Caco-2 (cell line): ENCODE measurements at regions of chr7 and their contacts with region 1.

Region 1: GRCh38 chr7:115679976-115680375 is 350.6 kb downstream of the TFEC start:
- DNase-seq: peak in 1 of 2 experiments; percentile 55
- H3K4me3 ChIP-seq: no peak overlapping the region
- H3K4me3 Mint-ChIP-seq: no peak overlapping the region
- H3K27ac Mint-ChIP-seq: no peak overlapping the region
- H3K4me1 ChIP-seq: no peaks in the 10 kb centered on the region
- H3K4me1 Mint-ChIP-seq: peaks cover 7% of the 10 kb centered on the region
- H3K27me3 ChIP-seq: no peaks in the 10 kb centered on the region; the same call in 1 of the 2 replicates
- H3K27me3 Mint-ChIP-seq: no peaks in the 10 kb centered on the region
- CTCF ChIP-seq: peak; percentile 58 to 59

Region 2: DNA sequence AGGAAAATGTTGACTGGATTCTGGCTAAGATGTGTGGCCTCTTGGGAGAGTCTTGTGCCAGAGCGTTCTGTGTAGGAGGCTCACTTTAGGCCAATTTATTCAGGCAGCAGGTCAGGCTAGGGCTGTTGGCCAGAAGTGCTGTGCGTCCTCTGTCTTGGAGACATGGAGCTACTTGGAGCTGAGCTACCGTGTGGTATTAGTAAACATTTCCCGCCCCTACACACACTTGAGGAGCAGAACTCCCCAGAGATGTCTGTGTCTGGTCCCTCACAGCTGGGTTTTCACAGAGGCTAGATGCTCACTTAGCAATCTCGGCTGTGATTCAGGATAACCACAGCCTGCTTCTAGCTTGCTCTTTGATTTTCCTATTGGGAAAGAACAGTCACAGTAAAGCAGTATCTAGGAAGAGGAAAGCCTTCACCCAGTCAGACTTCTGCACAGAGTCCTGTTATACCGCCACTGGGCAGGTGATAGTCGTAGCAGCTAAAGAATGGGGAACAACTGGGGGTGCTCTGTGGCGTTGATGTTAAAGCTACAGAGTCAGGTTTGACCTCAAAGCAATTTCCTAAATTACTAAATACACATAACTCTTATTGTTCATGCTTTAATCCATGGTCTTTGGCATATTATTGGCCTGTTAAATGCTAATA is 671.4 kb before region 1 on chr7:
- CTCF ChIA-PET with region 1: no interaction called
- POLR2A ChIA-PET with region 1: no interaction called
- intact Hi-C with region 1: no loop called
- DNase-seq: no peak
- H3K4me3 ChIP-seq: no peak overlapping the region
- H3K4me3 Mint-ChIP-seq: no peak overlapping the region
- H3K27ac Mint-ChIP-seq: no peak overlapping the region
- H3K4me1 ChIP-seq: 0 out of 2 replicates have a peak, but pooled peaks cover 4% of the 10 kb centered on the region
- H3K4me1 Mint-ChIP-seq: peaks cover 11% of the 10 kb centered on the region
- H3K27me3 ChIP-seq: no peaks in the 10 kb centered on the region
- H3K27me3 Mint-ChIP-seq: no peaks in the 10 kb centered on the region
- CTCF ChIP-seq: no peak

Region 3: GRCh38 chr7:115356139-115356746 is 323.7 kb before region 1 on chr7:
- CTCF ChIA-PET with region 1: no interaction called
- POLR2A ChIA-PET with region 1: no interaction called
- intact Hi-C with region 1: loop called (anchors 1 kb)
- DNase-seq: no peak
- H3K4me3 ChIP-seq: no peak overlapping the region
- H3K4me3 Mint-ChIP-seq: no peak overlapping the region
- H3K27ac Mint-ChIP-seq: no peak overlapping the region
- H3K4me1 ChIP-seq: no peaks in the 10 kb centered on the region
- H3K4me1 Mint-ChIP-seq: no peaks in the 10 kb centered on the region
- H3K27me3 ChIP-seq: no peaks in the 10 kb centered on the region
- H3K27me3 Mint-ChIP-seq: no peaks in the 10 kb centered on the region
- CTCF ChIP-seq: peak; percentile 28 to 51

Region 4: DNA sequence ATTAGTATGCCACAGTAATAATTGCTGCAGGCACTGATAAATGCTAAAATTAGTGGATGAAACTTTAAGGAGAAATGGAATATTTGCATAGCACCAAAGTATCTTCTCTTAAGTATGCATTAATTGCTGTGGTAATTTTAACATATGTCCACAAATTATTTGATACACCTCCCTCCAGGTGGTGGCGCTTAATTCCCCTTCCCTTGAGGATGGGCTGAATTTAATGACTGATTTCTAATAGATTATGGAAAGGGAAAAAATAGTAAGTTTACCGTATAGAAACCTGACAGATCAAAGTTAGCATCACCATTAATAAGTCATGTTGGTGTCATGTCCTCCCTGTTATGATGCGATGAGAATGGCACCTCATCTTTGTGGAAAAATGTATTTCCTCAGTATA is 168.6 kb before region 1 on chr7:
- CTCF ChIA-PET with region 1: interaction called, 3 read pairs
- POLR2A ChIA-PET with region 1: no interaction called
- intact Hi-C with region 1: loop called (anchors 1 kb)
- DNase-seq: no peak
- H3K4me3 ChIP-seq: no peak overlapping the region
- H3K4me3 Mint-ChIP-seq: no peak overlapping the region
- H3K27ac Mint-ChIP-seq: no peak overlapping the region
- H3K4me1 ChIP-seq: no peaks in the 10 kb centered on the region
- H3K4me1 Mint-ChIP-seq: no peaks in the 10 kb centered on the region
- H3K27me3 ChIP-seq: no peaks in the 10 kb centered on the region
- H3K27me3 Mint-ChIP-seq: peaks cover 8% of the 10 kb centered on the region
- CTCF ChIP-seq: no peak

Region 5: DNA sequence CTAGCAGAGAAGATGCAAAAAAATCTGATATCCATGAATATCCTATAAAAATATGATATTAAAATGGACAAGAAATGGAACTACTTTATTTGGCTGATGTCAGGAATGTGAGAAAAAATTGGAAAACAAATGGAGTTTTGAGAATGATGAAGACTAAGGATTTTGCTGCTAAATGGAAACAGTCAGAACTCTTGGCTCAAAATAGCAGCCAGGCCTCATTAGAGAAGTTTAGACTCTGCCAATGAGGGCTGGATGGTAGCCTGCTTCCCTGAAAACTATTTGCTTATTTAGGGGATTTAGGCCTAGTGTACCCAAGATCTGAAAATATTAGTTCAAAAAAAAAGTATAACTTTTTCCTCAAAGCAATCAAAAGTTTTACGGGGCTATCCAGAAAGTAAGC is 107.9 kb before region 1 on chr7:
- CTCF ChIA-PET with region 1: no interaction called
- POLR2A ChIA-PET with region 1: no interaction called
- intact Hi-C with region 1: no loop called
- DNase-seq: no peak
- H3K4me3 ChIP-seq: no peak overlapping the region
- H3K4me3 Mint-ChIP-seq: no peak overlapping the region
- H3K27ac Mint-ChIP-seq: no peak overlapping the region
- H3K4me1 ChIP-seq: no peaks in the 10 kb centered on the region; the same call in 1 of the 2 replicates
- H3K4me1 Mint-ChIP-seq: no peaks in the 10 kb centered on the region
- H3K27me3 ChIP-seq: no peaks in the 10 kb centered on the region
- H3K27me3 Mint-ChIP-seq: no peaks in the 10 kb centered on the region
- CTCF ChIP-seq: no peak

Region 6: DNA sequence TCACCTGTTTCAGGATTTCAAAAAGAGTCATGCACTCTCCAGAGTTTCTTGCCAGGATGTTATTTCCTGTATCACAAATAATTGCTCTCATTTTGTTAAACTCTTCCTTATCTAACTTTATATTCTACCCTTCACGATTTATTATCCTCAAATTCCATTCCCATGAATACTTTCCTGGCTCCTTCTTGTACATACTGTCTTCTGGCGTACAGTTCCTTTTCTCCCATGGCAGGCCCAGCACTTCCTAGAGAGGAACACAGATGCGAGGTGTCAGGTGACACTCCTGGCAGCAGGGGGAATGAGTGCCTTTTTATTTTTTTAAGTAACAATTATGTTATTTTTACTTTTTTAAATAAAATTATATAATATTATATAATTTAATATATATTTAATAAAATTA is 61.3 kb before region 1 on chr7:
- CTCF ChIA-PET with region 1: no interaction called
- POLR2A ChIA-PET with region 1: no interaction called
- intact Hi-C with region 1: no loop called
- DNase-seq: no peak
- H3K4me3 ChIP-seq: no peak overlapping the region
- H3K4me3 Mint-ChIP-seq: no peak overlapping the region
- H3K27ac Mint-ChIP-seq: no peak overlapping the region
- H3K4me1 ChIP-seq: peaks cover 24% of the 10 kb centered on the region
- H3K4me1 Mint-ChIP-seq: peaks cover 19% of the 10 kb centered on the region
- H3K27me3 ChIP-seq: no peaks in the 10 kb centered on the region
- H3K27me3 Mint-ChIP-seq: no peaks in the 10 kb centered on the region
- CTCF ChIP-seq: no peak

Region 7: GRCh38 chr7:115707258-115708012 is 27.5 kb after region 1 on chr7:
- CTCF ChIA-PET with region 1: interaction called, 5 read pairs
- POLR2A ChIA-PET with region 1: no interaction called
- intact Hi-C with region 1: loop called (anchors 1 kb)
- DNase-seq: peak; percentile 38 to 47
- H3K4me3 ChIP-seq: no peak overlapping the region
- H3K4me3 Mint-ChIP-seq: no peak overlapping the region
- H3K27ac Mint-ChIP-seq: peak overlapping the region; percentile 62
- H3K4me1 ChIP-seq: no peaks in the 10 kb centered on the region
- H3K4me1 Mint-ChIP-seq: no peaks in the 10 kb centered on the region
- H3K27me3 ChIP-seq: no peaks in the 10 kb centered on the region
- H3K27me3 Mint-ChIP-seq: peaks cover 6% of the 10 kb centered on the region
- CTCF ChIP-seq: peak; percentile 44 to 51

Region 8: DNA sequence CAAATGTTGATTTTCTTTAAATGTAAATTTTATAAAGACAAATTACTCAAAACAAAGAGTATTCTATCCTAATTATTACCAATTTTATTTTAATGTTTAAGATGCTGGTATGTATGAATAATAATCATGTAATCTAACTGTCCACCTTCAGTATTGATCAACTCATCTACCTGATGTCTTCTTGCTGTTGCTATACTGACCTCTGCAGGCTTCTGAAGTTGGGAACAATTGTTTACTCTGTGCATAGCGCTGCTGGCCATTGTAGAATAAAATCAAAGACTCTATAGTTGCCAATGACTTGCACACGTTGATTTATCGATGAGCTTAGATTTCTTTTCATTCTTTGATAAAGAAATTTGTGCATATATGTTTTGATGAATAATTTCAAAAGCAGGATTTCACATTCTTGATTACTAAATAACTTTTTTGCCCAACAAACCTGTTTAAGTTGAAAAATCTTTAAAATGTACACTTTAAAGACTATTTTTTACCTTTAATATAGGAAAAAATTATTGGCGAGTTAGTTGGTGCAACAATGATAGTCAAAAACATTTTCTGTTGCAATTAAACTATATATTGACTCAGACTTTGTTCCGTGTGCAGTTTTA is 68.3 kb after region 1 on chr7:
- CTCF ChIA-PET with region 1: no interaction called
- POLR2A ChIA-PET with region 1: no interaction called
- intact Hi-C with region 1: loop called (anchors 2 kb)
- DNase-seq: peak in 1 of 2 experiments; percentile 40
- H3K4me3 ChIP-seq: no peak overlapping the region
- H3K4me3 Mint-ChIP-seq: no peak overlapping the region
- H3K27ac Mint-ChIP-seq: no peak overlapping the region
- H3K4me1 ChIP-seq: no peaks in the 10 kb centered on the region
- H3K4me1 Mint-ChIP-seq: no peaks in the 10 kb centered on the region
- H3K27me3 ChIP-seq: no peaks in the 10 kb centered on the region
- H3K27me3 Mint-ChIP-seq: no peaks in the 10 kb centered on the region
- CTCF ChIP-seq: peak; percentile 29 to 64

Region 9: GRCh38 chr7:115910541-115911164 is 230.7 kb after region 1 on chr7:
- CTCF ChIA-PET with region 1: no interaction called
- POLR2A ChIA-PET with region 1: no interaction called
- intact Hi-C with region 1: loop called (anchors 1 kb)
- DNase-seq: peak in 1 of 2 experiments; percentile 25
- H3K4me3 ChIP-seq: no peak overlapping the region
- H3K4me3 Mint-ChIP-seq: no peak overlapping the region
- H3K27ac Mint-ChIP-seq: no peak overlapping the region
- H3K4me1 ChIP-seq: no peaks in the 10 kb centered on the region
- H3K4me1 Mint-ChIP-seq: peaks cover 5% of the 10 kb centered on the region
- H3K27me3 ChIP-seq: no peaks in the 10 kb centered on the region
- H3K27me3 Mint-ChIP-seq: no peaks in the 10 kb centered on the region
- CTCF ChIP-seq: peak; percentile 63 to 69